Panc1 (cell line): ENCODE measurements at regions of chr19 and their contacts with region 1.

Region 1: GRCh38 chr19:4976401-4977298 is 7.7 kb downstream of the KDM4B start:
- DNase-seq: no peak
- ATAC-seq: no peak
- H3K4me3 ChIP-seq: no peak overlapping the region
- H3K27ac ChIP-seq: no peak overlapping the region
- H3K4me1 ChIP-seq: peaks cover 29% of the 10 kb centered on the region
- H3K27me3 ChIP-seq: no peaks in the 10 kb centered on the region
- CTCF ChIP-seq: no peak

Region 2: GRCh38 chr19:5031231-5032100 is 54.8 kb after region 1 on chr19:
- CTCF ChIA-PET with region 1: interaction called, 3 read pairs
- POLR2A ChIA-PET with region 1: no interaction called
- in situ Hi-C with region 1: no loop called
- intact Hi-C with region 1: loop called (anchors 10 kb)
- DNase-seq: peak; percentile 50
- ATAC-seq: peak; percentile 92
- H3K4me3 ChIP-seq: no peak overlapping the region
- H3K27ac ChIP-seq: no peak overlapping the region
- H3K4me1 ChIP-seq: no peaks in the 10 kb centered on the region
- H3K27me3 ChIP-seq: no peaks in the 10 kb centered on the region
- CTCF ChIP-seq: peak; percentile 88

Region 3: DNA sequence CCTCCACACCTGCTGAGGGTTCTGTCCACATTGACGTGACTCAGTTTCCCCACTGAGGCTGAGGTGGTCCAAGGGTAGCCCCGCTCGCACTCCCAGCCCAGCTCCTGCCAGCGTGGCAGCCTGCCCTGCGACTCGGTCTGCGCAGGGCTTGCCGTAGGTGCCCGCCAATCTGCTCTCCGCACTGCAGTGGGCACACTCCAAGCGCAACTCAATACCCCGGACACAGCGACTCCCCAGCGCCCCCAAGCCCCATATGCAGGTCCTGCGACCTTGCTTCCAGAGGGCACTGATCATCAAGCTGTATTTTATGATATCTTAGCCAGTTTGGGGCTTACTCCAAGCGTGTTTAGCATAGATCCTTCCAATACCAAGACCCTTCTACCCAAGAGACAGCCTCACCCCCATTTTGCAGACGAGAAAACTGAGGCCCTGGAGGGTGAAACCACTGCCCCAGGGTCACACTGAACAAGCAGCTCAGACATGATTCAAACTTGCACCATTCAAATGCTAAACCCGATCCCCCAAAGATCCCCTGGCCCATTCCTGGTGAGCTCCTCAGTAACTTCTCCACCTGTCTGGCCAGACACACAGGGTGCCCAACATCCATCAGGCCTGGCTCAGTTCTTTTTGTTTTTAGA is 350.5 kb after region 1 on chr19:
- CTCF ChIA-PET with region 1: no interaction called
- POLR2A ChIA-PET with region 1: interaction called, 17 read pairs
- in situ Hi-C with region 1: no loop called
- intact Hi-C with region 1: no loop called
- DNase-seq: no peak
- ATAC-seq: no peak; the same call in 1 of the 2 replicates
- H3K4me3 ChIP-seq: no peak overlapping the region
- H3K27ac ChIP-seq: no peak overlapping the region
- H3K4me1 ChIP-seq: no peaks in the 10 kb centered on the region
- H3K27me3 ChIP-seq: no peaks in the 10 kb centered on the region
- CTCF ChIP-seq: no peak